SK-N-SH (cell line): ENCODE measurements at regions of chr15 and their contacts with region 1.

Region 1: GRCh38 chr15:48358229-48358641 is 27.0 kb downstream of the DUT start:
- DNase-seq: peak; percentile 32
- H3K4me3 ChIP-seq: no peak overlapping the region
- H3K27ac ChIP-seq: peak overlapping the region; percentile 31 to 75; a peak in 3 of 4 replicates
- H3K4me1 ChIP-seq: peaks cover 0 to 14% of the 10 kb centered on the region in 2 experiments; a peak in 2 of 4 replicates
- H3K27me3 ChIP-seq: no peaks in the 10 kb centered on the region
- CTCF ChIP-seq: peak; percentile 82
- EP300 ChIP-seq: no peak
- RAD21 ChIP-seq: peak; percentile 87

Region 2: DNA sequence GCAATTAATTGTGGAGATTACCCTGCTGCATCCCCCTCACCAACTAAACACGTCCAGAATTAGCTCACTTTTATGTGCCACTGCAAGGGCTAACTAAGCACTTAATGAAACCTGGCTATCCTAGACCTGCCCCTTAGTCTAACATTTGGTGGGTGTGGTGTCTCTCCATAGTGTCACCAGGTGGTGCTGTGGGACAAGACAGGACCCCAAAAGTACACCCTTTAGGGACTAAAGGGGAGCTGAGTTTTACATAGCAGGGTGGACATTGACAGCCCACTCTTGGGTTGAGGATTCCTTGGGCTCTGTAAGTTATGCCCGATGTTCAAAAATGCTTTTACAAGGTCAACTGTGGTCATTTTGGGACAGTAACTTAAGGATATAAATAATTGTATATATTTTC is 21.3 kb before region 1 on chr15:
- CTCF ChIA-PET with region 1: interaction called, 26 read pairs
- POLR2A ChIA-PET with region 1: no interaction called
- DNase-seq: peak; percentile 41
- H3K4me3 ChIP-seq: no peak overlapping the region
- H3K27ac ChIP-seq: no peak overlapping the region
- H3K4me1 ChIP-seq: peaks cover 7 to 13% of the 10 kb centered on the region in 2 experiments; a peak in 3 of 4 replicates
- H3K27me3 ChIP-seq: no peaks in the 10 kb centered on the region
- CTCF ChIP-seq: peak; percentile 55
- EP300 ChIP-seq: no peak
- RAD21 ChIP-seq: peak; percentile 55

Region 3: GRCh38 chr15:48373821-48374451 is 15.7 kb after region 1 on chr15:
- CTCF ChIA-PET with region 1: interaction called, 10 read pairs
- POLR2A ChIA-PET with region 1: no interaction called
- DNase-seq: no peak
- H3K4me3 ChIP-seq: no peak overlapping the region
- H3K27ac ChIP-seq: peak overlapping the region in 1 of 2 experiments; percentile 83; a peak in 2 of 4 replicates
- H3K4me1 ChIP-seq: peaks cover 0 to 3% of the 10 kb centered on the region in 2 experiments; a peak in 1 of 4 replicates
- H3K27me3 ChIP-seq: no peaks in the 10 kb centered on the region
- CTCF ChIP-seq: no peak
- EP300 ChIP-seq: peak in 1 of 2 experiments; percentile 31; a peak in 1 of 4 replicates
- RAD21 ChIP-seq: no peak

Region 4: DNA sequence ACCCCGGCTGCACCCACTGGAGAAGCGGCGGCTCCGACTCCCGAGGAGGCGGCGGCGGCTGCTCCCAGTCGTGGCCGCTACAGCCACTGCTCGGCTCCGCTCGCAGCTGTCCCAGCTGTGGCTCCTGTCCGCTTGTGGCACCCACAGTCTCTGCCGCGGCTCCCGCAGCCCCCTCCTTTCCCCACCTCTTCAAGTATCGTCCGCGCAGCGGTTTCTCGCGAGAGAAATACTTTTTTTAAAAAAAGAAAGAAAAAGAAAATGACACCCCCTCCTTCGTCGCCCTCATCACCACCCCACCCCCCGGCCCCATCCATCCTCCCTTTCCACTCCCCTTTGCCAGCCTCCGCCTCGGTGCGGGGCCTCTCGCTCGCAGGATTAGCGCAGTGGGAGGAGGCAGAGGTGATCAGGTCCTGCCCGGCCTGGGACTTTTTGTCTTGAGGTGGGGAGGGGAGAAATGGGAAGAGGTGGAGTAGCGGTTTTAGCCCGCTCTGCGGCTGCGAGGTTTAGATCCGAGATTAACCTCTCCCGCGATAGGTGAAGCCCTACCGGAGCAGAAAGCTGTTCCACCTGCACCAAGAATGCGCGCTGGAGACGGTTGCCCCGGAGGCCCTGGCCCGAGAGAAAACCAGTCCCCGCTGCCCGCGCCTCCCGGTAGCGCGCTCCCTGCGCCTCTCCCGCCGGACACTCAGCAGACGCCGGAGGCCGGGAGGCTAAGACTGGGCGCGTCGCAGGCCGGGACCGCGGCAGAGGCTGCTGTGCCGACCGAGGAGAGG is 287.5 kb after region 1 on chr15 and contains the start of gene FBN1:
- CTCF ChIA-PET with region 1: interaction called, 17 read pairs
- POLR2A ChIA-PET with region 1: no interaction called
- DNase-seq: peak; percentile 92
- H3K4me3 ChIP-seq: peak within 1 kb of the TSS; percentile 75 to 96
- H3K27ac ChIP-seq: peak within 1 kb of the TSS; percentile 89 to 91
- H3K4me1 ChIP-seq: peaks cover 12 to 20% of the 10 kb centered on the region in 2 experiments; a peak in 3 of 4 replicates
- H3K27me3 ChIP-seq: no peaks in the 10 kb centered on the region
- CTCF ChIP-seq: no peak
- EP300 ChIP-seq: no peak
- RAD21 ChIP-seq: no peak
- polyA plus RNA-seq, gene FBN1: 248 and 298 TPM in 2 replicates

Region 5: GRCh38 chr15:48794697-48795134 is 436.5 kb after region 1 on chr15:
- CTCF ChIA-PET with region 1: interaction called, 47 read pairs
- POLR2A ChIA-PET with region 1: no interaction called
- DNase-seq: no peak
- H3K4me3 ChIP-seq: no peak overlapping the region
- H3K27ac ChIP-seq: no peak overlapping the region
- H3K4me1 ChIP-seq: peaks cover 5 to 17% of the 10 kb centered on the region in 2 experiments
- H3K27me3 ChIP-seq: no peaks in the 10 kb centered on the region
- CTCF ChIP-seq: no peak
- EP300 ChIP-seq: no peak
- RAD21 ChIP-seq: no peak

Region 6: DNA sequence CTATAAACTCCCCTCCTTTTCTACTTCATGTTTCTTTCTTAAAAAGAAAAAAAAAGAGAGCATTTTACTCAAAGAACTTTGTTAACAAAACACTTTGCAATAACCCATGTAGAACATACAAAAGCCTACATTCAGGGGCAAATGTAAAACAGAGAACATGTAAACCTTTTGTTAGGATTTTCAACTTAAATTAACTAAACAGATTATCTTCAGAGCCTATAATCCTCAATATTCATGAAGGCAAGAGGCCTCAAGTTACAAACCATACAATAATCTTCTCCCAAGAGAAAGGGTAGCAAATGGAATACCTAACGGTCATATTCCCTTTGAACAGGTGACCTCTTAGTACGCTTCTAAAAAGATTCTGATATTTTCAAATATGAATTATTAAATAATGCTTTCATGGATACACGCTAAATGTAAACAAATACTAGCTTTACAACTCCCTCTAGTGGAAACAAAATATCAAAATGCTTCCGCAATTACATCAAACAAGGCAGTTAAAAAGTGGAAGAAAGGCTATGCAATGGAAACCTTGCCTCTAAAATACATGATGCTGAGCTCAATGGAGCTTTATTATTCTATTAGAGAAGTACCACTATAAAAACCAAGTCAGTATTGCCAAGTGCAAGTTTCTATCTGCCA is 442.7 kb after region 1 on chr15:
- CTCF ChIA-PET with region 1: interaction called, 47 read pairs
- POLR2A ChIA-PET with region 1: no interaction called
- DNase-seq: peak; percentile 20
- H3K4me3 ChIP-seq: no peak overlapping the region
- H3K27ac ChIP-seq: peak overlapping the region in 1 of 2 experiments; percentile 80; a peak in 1 of 4 replicates
- H3K4me1 ChIP-seq: peaks cover 12 to 39% of the 10 kb centered on the region in 2 experiments
- H3K27me3 ChIP-seq: no peaks in the 10 kb centered on the region
- CTCF ChIP-seq: peak; percentile 71
- EP300 ChIP-seq: no peak
- RAD21 ChIP-seq: peak; percentile 69

Region 7: DNA sequence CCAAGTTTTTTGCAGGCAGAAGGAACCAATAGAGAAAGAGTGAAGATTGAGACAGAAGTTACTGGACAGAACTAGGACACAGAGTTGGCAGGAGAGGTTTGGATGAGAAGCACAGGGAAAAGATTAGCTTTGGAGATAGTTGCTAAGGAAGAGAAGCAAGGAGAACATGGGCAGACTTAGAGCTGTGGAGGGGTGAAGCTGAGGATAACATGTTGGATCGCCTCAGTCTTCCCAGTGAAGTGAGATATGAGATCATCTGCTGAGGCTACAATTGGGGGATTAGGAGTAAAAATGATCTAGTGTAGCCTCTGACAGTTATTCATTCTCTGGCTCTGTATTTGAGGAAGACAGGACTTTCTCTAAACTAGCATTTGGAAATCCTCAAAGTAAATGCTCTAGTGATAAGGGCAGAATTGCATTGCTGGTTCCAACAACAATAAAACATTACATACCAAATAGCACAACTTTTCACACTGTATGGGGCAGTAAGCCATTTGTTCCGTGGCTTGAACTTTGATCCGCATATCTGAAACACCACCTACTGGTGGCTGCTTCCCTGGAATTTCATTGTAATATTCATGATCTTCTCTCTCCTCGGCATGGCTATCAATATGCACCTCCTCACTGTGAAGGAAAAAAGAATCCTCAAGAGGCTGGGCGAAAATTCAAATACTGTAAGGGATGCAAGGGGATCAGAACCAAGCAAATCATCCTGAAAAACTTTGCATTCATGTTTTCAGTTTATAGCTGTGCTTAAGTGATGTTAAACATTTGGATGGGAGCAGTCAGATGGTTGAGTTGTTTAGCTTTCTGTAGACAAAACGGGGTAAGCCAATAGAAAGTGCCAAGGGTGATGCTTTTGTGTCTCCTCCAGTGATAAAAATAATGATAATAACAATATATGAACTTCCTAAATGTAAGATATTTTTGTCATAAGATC is 497.5 kb after region 1 on chr15:
- CTCF ChIA-PET with region 1: interaction called, 29 read pairs
- POLR2A ChIA-PET with region 1: no interaction called
- DNase-seq: no peak
- H3K4me3 ChIP-seq: no peak overlapping the region
- H3K27ac ChIP-seq: peak overlapping the region; percentile 44 to 50
- H3K4me1 ChIP-seq: peaks cover 16 to 24% of the 10 kb centered on the region in 2 experiments; a peak in 3 of 4 replicates
- H3K27me3 ChIP-seq: no peaks in the 10 kb centered on the region
- CTCF ChIP-seq: peak; percentile 66
- EP300 ChIP-seq: no peak
- RAD21 ChIP-seq: peak; percentile 70